Cardiac septum (tissue), 1 donor: ENCODE measurements at regions of chr5 and their contacts with region 1.

Region 1: GRCh38 chr5:82351754-82352145 is 73.6 kb upstream of the RPS23 start:
- DNase-seq: no peak

Region 2: GRCh38 chr5:82107267-82107666 is 244.5 kb before region 1 on chr5:
- intact Hi-C with region 1: no loop called
- DNase-seq: no peak

Region 3: DNA sequence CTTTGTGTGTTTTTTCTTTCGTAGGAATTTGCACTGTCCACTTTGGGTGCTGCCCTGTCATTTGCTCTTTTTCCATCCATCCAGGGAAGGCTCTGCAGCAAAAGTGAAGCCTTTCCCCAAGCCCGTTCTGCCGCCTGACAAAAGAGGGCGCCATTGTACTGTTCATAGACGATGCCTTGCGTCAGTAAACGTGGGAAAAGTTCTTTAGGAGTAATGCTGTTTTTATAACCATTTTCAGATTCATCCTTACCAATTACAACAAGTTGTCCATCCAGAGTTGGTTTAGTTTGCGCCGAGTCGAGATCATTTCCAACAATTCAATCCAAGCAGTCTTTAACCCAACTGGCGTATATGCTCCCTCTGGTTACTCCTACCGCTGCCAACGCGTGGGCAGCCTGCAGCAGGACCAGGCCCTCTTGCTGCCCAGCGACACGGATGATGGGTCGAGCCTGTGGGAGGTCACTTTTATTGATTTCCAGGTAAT is 39.3 kb before region 1 on chr5:
- intact Hi-C with region 1: loop called (anchors 5 kb)
- DNase-seq: no peak

Region 4: DNA sequence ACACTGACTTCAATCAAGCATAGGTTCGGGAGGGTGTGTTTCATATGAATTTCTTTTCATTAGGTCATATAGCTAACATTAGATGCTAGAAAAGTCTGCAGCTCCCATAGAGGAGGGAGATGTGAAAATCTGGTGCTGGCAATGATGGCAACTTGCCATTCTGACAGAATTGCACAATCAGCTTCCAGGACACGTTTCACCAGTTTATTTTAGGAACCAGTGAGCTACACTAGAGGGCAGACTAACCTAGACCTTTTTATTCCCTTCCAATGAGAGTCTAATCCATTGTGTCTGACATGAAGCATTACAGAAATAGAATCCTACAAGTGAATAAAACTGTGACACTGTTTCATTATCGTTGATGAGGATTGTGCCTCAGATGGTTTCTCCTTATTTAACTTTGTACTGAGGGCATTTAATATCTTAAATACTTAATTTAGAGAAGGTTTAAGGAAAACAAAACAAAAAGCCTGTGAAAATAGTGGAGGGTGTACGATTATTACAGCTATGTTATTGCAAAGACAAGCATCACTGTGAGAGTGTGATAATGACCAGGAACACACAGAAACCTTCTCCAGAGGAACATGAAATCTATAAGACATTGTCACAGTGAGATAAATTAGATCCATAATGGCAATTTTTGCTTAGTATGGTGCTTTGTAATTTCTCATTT is 289.7 kb after region 1 on chr5:
- intact Hi-C with region 1: loop called (anchors 2 kb)
- DNase-seq: no peak

Region 5: GRCh38 chr5:82749461-82749820 is 397.7 kb after region 1 on chr5:
- intact Hi-C with region 1: loop called (anchors 10 kb)
- DNase-seq: no peak

Region 6: DNA sequence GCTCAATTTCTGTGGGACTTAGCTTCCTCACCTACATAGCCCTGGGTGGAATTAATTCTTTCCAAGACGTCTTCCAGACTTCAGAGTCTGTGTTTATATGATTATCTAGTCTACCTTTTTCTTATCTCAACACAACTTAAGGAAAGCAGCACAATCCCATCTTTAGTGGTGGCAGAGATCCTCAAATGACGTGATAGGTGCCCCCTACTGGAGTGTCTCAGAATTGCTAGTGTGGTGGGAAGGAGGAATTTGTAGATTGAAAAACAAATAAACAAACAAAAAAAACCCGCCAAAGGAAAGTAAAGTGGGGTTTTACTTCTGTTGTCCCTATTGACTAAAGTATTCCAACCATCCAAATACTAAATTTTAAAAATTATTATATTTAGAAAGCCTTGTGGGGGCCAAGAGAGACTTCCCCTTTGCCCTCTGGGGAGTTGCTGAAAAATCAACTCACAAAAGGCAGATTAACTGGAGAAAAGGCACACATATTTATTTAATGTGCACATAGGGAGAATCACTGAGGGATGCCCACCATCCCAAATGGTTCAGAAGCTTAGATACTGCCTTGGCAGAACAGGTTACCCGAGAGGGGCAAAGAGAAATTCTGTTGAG is 442.2 kb after region 1 on chr5:
- intact Hi-C with region 1: loop called (anchors 2 kb)
- DNase-seq: no peak

Region 7: GRCh38 chr5:83104021-83104420 is 752.3 kb after region 1 on chr5:
- intact Hi-C with region 1: loop called (anchors 10 kb)
- DNase-seq: no peak

Region 8: GRCh38 chr5:83564069-83564749 is 1212.5 kb after region 1 on chr5:
- intact Hi-C with region 1: loop called (anchors 5 kb)
- DNase-seq: no peak